MCF 10A (cell line): ENCODE measurements at regions of chr3 and their contacts with region 1.

Region 1: GRCh38 chr3:48635222-48636021 is at the start of gene SLC26A6:
- DNase-seq: peak; percentile 98
- H3K4me3 Mint-ChIP-seq: peak within 1 kb of the TSS; percentile 84
- H3K27ac Mint-ChIP-seq: peak within 1 kb of the TSS; percentile 85
- H3K4me1 Mint-ChIP-seq: peaks cover 10% of the 10 kb centered on the region
- H3K27me3 Mint-ChIP-seq: no peaks in the 10 kb centered on the region
- CTCF ChIP-seq: peak; percentile 48
- total RNA-seq, gene SLC26A6: 47.4 and 63.3 TPM in 2 replicates

Region 2: DNA sequence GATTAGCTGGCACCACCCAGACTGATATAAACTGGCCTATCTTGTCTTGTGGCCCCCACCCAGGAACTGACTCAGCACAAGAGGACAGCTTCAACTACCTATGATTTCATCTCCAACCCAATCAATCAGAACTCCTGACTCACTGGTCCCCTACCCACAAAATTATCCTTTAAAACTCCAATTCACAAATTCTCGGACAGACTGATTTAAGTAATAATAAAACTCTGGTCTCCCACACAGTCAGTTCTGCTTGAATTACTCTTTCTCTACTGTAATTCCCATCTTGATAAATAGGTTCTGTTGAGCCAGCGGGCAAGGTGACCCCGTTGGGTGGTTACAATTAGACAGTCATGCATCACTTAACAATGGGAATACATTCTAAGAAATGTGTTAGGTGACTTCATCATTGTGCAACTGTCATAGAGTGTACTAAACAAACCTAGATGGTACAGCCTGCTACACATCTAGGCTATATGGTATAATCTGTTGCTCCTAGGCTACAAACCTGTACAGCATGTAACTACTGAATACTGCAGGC is 571.1 kb before region 1 on chr3:
- CTCF ChIA-PET with region 1: no interaction called
- POLR2A ChIA-PET with region 1: no interaction called
- intact Hi-C with region 1: no loop called
- DNase-seq: no peak
- H3K4me3 Mint-ChIP-seq: no peak overlapping the region
- H3K27ac Mint-ChIP-seq: no peak overlapping the region
- H3K4me1 Mint-ChIP-seq: peaks cover 17% of the 10 kb centered on the region
- H3K27me3 Mint-ChIP-seq: no peaks in the 10 kb centered on the region
- CTCF ChIP-seq: no peak

Region 3: DNA sequence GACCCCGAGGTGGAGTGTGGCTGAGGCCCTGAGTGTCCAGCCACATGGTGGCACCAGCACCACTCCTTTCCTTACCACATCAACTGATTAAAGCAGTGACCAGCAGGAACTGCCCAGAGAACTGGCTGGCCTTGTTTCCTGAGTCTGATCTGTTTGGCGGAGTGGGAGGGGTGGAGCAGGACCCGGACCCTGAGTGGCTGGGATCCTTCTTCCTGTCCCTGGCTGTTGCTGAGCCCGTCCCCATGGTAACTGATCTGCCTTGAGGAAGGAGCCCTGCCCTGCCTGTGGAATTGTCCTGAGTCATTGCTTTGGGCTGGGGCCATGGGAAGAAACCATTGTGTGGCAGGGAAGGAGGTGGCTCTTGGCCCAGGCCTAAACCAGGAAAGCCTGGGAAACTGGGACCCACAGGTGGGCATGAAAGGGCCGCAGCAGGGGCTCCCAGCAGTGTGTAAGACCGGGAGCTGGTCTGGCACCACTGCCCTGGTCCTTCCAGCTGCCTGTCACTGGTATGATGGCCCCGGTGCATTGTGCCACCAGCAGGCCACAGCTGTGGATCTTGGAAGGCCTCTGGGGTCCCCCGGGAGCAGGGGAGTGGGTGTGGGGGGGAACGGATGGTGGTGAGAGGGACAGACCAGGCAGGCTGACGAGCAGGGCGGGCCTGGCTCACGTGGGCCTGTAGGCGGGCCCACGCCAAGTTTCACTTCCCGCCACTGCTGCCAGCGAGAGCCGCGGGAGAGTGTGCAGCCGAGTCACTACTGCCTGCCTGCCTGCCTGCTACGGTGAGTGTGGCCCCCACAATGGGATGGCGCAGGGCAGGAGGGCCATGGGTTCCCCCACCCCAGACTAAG is 169.7 kb before region 1 on chr3:
- CTCF ChIA-PET with region 1: no interaction called
- POLR2A ChIA-PET with region 1: no interaction called
- intact Hi-C with region 1: loop called (anchors 1 kb)
- DNase-seq: peak; percentile 99
- H3K4me3 Mint-ChIP-seq: peak overlapping the region; percentile 67
- H3K27ac Mint-ChIP-seq: peak overlapping the region; percentile 99
- H3K4me1 Mint-ChIP-seq: peaks cover 25% of the 10 kb centered on the region
- H3K27me3 Mint-ChIP-seq: no peaks in the 10 kb centered on the region
- CTCF ChIP-seq: peak; percentile 38

Region 4: DNA sequence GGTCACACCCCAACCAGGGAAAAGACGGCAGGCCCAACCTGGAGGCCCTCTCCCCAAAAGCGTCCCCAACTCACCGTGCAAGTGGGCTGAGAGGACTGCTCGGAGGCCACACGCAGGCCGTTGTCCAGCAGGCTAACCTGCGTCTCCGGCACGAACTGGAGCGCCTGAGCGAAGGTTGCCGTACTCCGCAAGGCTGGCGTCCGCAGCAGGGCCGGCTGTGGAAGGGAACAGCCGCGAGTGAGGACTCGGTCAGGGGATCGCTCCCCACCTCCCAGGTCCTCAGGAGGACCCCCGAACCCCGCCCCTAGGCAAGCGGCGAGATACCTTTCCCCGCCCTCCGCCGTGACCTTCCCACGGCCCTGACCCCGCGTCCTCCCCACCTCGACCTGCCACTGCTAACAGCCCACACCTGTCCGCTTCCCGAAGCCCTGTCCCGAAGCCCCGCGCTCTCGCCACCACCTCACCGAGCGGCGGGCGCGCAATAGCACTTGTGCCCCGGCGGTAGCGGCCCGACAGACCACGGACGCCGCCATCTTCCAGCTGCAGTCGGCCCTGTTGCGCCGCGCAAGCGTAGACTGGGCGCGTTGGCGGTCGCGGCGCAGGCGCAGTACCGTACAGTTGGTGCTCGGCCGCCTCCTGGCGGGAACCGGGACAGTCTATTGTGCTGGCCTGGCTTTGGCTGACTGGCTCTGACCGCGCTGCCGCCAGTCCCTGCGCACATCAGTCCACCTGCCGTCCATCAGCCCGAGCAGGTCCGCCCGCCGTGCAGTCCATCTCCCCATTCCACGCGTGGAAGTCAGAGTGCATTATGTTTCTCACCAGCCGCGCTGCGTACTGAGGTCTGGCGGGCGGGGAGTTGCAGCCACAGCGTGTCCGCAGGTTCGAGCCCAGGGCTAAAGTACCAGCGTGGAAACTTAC is 26.1 kb before region 1 on chr3 and contains the start of gene UQCRC1:
- CTCF ChIA-PET with region 1: interaction called, 12 read pairs
- POLR2A ChIA-PET with region 1: interaction called, 15 read pairs
- intact Hi-C with region 1: loop called (anchors 1 kb)
- DNase-seq: peak; percentile 91
- H3K4me3 Mint-ChIP-seq: peak within 1 kb of the TSS; percentile 94
- H3K27ac Mint-ChIP-seq: peak within 1 kb of the TSS; percentile 94
- H3K4me1 Mint-ChIP-seq: peaks cover 18% of the 10 kb centered on the region
- H3K27me3 Mint-ChIP-seq: no peaks in the 10 kb centered on the region
- CTCF ChIP-seq: peak; percentile 47
- total RNA-seq, gene UQCRC1: 383 and 413 TPM in 2 replicates

Region 5: DNA sequence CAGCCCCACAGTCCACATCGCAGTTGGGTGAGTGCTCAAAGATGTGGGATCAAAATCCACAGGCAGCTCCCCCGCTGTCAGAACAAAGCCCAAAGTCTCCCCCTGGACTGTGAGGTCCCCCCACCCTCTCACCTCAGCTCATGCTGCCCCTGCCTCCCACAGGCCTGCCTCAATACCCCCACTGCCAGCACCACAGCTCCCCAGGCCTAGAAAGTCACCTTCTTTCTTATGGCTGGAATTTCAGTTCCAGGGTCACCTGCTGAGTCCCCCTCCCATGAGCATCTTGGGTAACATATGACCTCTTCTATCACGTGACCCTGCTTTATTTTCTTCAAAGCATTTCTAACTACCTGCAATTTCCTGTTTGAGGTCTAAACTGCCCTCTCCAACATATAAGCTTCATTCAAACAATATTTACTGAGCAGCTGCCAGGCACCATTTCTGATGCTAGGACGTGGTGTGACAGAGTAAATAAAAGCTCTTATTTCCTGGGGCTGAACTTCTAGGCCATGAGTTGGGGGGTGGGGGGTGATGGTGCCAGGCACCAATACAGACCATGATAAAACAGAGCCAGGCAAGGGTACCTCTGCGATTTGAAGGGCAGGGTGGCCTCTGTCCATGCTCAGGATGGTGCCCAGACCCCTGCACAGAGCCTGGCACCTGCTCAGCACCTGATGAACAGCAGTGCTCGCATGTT is 11.4 kb before region 1 on chr3:
- CTCF ChIA-PET with region 1: interaction called, 16 read pairs
- POLR2A ChIA-PET with region 1: interaction called, 50 read pairs
- intact Hi-C with region 1: no loop called
- DNase-seq: no peak
- H3K4me3 Mint-ChIP-seq: no peak overlapping the region
- H3K27ac Mint-ChIP-seq: no peak overlapping the region
- H3K4me1 Mint-ChIP-seq: peaks cover 5% of the 10 kb centered on the region
- H3K27me3 Mint-ChIP-seq: no peaks in the 10 kb centered on the region
- CTCF ChIP-seq: no peak

Region 6: DNA sequence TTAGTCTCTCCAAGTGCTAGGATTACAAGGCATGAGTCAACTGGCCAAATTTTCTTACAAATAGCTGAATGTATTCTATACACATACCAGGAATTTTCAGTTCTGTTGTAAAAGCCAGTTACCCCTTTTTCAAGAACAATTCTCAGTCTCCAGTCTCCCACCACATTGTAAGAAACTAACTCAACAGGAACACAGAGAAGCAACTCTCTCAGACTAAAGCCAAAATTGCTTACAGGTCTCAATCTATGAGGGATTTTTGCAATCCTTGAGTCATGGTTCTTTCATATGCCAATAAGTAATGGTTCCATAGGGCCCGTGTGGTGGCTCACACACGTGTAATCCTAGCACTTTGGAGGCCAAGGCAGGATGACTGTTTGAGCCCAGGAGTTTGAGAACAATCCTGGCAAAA is 73.1 kb after region 1 on chr3:
- CTCF ChIA-PET with region 1: interaction called, 4 read pairs
- POLR2A ChIA-PET with region 1: interaction called, 6 read pairs
- intact Hi-C with region 1: loop called (anchors 1 kb)
- DNase-seq: peak; percentile 72
- H3K4me3 Mint-ChIP-seq: peak overlapping the region; percentile 53
- H3K27ac Mint-ChIP-seq: peak overlapping the region; percentile 96
- H3K4me1 Mint-ChIP-seq: peaks cover 21% of the 10 kb centered on the region
- H3K27me3 Mint-ChIP-seq: no peaks in the 10 kb centered on the region
- CTCF ChIP-seq: no peak